Activated CD4-positive, alpha-beta T cell treated with anti-CD3 and anti-CD28 coated beads, Interleukin-2, amount 10 ng/mL, durations not matched to agents 24 days and 14 days (primary cell): ENCODE measurements at regions of chrX and their contacts with region 1.

Region 1: GRCh38 chrX:38803586-38804431 is 2.5 kb downstream of the MID1IP1 start:
- DNase-seq: peak; percentile 93
- H3K4me3 Mint-ChIP-seq: peak overlapping the region; percentile 96
- H3K27ac Mint-ChIP-seq: peak overlapping the region; percentile 99
- H3K4me1 Mint-ChIP-seq: peaks cover 16% of the 10 kb centered on the region
- H3K27me3 Mint-ChIP-seq: no peaks in the 10 kb centered on the region

Region 2: GRCh38 chrX:38055170-38055847 is 748.5 kb before region 1 on chrX:
- intact Hi-C with region 1: no loop called
- DNase-seq: no peak
- H3K4me3 Mint-ChIP-seq: no peak overlapping the region
- H3K27ac Mint-ChIP-seq: no peak overlapping the region
- H3K4me1 Mint-ChIP-seq: no peaks in the 10 kb centered on the region
- H3K27me3 Mint-ChIP-seq: peaks cover 2% of the 10 kb centered on the region

Region 3: DNA sequence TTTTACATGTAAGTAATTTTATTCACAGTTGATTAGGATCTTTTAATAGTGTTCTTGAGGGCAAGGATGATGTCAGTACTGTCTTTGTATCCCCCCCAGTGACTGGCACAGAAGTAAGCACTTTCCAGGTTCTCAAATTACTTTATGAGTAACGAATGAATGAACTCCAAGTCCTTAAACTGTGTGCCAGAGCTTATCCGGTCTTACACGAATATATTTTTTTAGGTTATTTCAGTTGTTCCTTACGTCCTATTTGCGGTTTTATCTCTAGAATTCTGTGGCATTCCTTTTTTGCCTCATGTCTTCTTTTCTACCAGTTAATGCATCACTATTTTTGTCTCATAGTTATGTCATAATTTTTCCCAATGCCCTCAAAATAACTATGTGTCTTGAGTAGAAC is 109.4 kb before region 1 on chrX:
- intact Hi-C with region 1: no loop called
- DNase-seq: no peak
- H3K4me3 Mint-ChIP-seq: no peak overlapping the region
- H3K27ac Mint-ChIP-seq: no peak overlapping the region
- H3K4me1 Mint-ChIP-seq: no peaks in the 10 kb centered on the region
- H3K27me3 Mint-ChIP-seq: no peaks in the 10 kb centered on the region

Region 4: DNA sequence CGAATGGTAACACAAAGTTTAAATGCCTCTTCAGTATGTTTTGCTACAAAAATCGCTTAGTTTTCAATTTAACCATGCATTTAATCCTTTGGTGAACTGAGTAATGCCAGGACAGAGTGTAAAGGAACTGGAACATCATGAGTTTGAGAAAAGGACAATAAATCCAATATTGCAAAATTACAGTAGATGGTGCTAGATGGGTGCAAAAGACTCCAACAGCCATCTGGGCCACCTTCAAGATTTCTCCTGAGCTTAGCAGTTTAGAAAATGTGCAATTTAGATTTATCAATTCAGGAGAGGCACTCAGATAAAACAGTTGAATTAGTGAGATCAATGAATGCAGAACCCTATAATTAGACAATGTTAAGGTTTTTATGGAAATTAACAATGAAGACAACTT is 35.7 kb before region 1 on chrX:
- intact Hi-C with region 1: no loop called
- DNase-seq: peak; percentile 54
- H3K4me3 Mint-ChIP-seq: no peak overlapping the region
- H3K27ac Mint-ChIP-seq: no peak overlapping the region
- H3K4me1 Mint-ChIP-seq: no peaks in the 10 kb centered on the region
- H3K27me3 Mint-ChIP-seq: no peaks in the 10 kb centered on the region

Region 5: GRCh38 chrX:38817004-38817703 is 13.3 kb after region 1 on chrX:
- intact Hi-C with region 1: loop called (anchors 1 kb)
- DNase-seq: peak; percentile 72
- H3K4me3 Mint-ChIP-seq: no peak overlapping the region
- H3K27ac Mint-ChIP-seq: no peak overlapping the region
- H3K4me1 Mint-ChIP-seq: peaks cover 9% of the 10 kb centered on the region
- H3K27me3 Mint-ChIP-seq: no peaks in the 10 kb centered on the region

Region 6: DNA sequence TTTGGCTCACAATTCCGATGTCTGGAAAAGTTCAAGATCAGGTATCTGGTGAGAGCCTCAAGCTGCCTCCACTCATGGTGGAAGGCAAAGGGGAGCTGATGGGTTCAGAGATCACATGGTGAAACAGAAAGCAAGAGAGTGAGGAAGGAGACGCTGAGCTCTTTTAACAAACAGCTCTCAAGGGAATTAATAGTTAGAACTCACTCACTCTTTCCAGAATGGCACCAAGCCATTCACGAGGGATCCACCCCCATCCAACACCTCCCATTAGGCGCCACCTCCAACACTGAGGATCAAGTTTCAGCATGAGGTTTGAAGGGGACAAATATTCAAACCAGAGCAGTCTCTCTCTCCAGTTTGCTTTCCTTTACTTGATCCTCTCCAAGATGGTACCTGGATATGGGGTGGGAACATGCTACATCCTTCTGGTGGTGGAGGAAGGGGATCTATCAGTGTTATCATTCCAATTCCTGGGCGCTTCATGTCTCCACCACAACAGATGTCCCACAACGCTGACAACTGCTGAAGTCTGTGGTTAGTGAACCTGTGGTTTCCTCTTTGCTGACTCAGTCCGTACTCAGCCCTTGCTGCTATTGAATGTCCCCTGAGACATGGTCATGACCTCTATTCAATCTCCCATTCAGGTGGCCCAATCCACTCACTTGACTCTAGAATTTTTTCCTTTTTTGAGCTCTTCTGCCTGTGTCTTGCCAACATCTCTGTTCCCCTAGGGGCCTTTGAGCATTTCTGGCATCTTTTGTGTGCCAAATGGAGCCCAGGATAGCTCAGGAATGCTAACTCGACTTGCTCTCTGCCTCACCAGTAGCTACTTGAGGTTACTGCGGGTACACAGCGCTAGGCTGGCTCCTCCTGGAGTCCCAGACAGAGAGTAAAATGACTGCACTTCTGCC is 392.6 kb after region 1 on chrX:
- intact Hi-C with region 1: loop called (anchors 5 kb)
- DNase-seq: peak; percentile 85
- H3K4me3 Mint-ChIP-seq: peak overlapping the region; percentile 47
- H3K27ac Mint-ChIP-seq: peak overlapping the region; percentile 91
- H3K4me1 Mint-ChIP-seq: peaks cover 47% of the 10 kb centered on the region
- H3K27me3 Mint-ChIP-seq: no peaks in the 10 kb centered on the region

Region 7: GRCh38 chrX:39613482-39613921 is 809.7 kb after region 1 on chrX:
- intact Hi-C with region 1: loop called (anchors 1 kb)
- DNase-seq: peak; percentile 63
- H3K4me3 Mint-ChIP-seq: peak overlapping the region; percentile 90
- H3K27ac Mint-ChIP-seq: peak overlapping the region; percentile 98
- H3K4me1 Mint-ChIP-seq: peaks cover 26% of the 10 kb centered on the region
- H3K27me3 Mint-ChIP-seq: no peaks in the 10 kb centered on the region

Region 8: GRCh38 chrX:40097497-40098263 is 1293.9 kb after region 1 on chrX and contains the start of gene BCOR:
- intact Hi-C with region 1: loop called (anchors 10 kb)
- DNase-seq: peak; percentile 90
- H3K4me3 Mint-ChIP-seq: peak within 1 kb of the TSS; percentile 97
- H3K27ac Mint-ChIP-seq: peak within 1 kb of the TSS; percentile 92
- H3K4me1 Mint-ChIP-seq: peaks cover 25% of the 10 kb centered on the region
- H3K27me3 Mint-ChIP-seq: no peaks in the 10 kb centered on the region
- total RNA-seq, gene BCOR: 61.0 and 64.5 TPM in 2 replicates

Region 9: GRCh38 chrX:40647307-40648197 is 1843.7 kb after region 1 on chrX and contains the start of gene CXorf38:
- intact Hi-C with region 1: loop called (anchors 5 kb)
- DNase-seq: peak; percentile 97
- H3K4me3 Mint-ChIP-seq: peak within 1 kb of the TSS; percentile 91
- H3K27ac Mint-ChIP-seq: peak within 1 kb of the TSS; percentile 92
- H3K4me1 Mint-ChIP-seq: peaks cover 21% of the 10 kb centered on the region
- H3K27me3 Mint-ChIP-seq: no peaks in the 10 kb centered on the region
- total RNA-seq, gene CXorf38: 16.6 and 16.8 TPM in 2 replicates